Heart left ventricle (tissue), 16 donors: ENCODE measurements at regions of chr13 and their contacts with region 1.

Region 1: DNA sequence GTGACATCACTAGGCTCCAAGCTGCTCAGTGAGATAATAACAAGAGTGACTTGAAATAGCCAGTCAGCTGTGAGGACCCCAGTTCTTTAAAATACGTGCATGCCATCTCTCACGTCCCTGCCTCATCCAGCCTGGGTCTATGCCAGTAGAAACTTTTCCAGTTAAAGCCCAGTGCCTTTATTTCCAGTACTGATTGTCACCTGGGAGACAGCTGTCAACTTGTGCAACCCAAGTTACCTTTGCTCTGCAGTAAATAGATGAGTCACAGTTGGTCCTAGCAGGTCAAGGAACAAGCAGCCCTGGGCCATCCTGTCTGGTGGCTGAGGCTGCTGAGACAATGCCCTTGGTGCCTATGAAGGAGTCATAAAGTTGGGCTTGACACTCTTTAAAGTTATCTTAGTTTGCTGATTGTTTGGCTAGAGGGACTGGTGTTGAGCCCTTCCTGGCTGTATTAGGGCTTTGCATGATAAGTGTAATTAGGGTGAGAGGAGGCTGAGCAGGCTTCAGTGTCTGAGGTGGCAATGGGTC is 228.7 kb downstream of the LACC1 start:
- DNase-seq: peak in 4 of 5 donors; percentile 25 to 85 (median 50)
- ATAC-seq: peak; percentile 76 to 94 (median 84)
- H3K4me3 ChIP-seq: no peak overlapping the region
- H3K27ac ChIP-seq: peak overlapping the region; percentile 18 to 84 (median 75)
- H3K4me1 ChIP-seq: peaks cover 4 to 74% (median 28%) of the 10 kb centered on the region in 12 donors
- H3K27me3 ChIP-seq: no peaks in the 10 kb centered on the region
- CTCF ChIP-seq: no peak
- POLR2A ChIP-seq: no peak

Region 2: DNA sequence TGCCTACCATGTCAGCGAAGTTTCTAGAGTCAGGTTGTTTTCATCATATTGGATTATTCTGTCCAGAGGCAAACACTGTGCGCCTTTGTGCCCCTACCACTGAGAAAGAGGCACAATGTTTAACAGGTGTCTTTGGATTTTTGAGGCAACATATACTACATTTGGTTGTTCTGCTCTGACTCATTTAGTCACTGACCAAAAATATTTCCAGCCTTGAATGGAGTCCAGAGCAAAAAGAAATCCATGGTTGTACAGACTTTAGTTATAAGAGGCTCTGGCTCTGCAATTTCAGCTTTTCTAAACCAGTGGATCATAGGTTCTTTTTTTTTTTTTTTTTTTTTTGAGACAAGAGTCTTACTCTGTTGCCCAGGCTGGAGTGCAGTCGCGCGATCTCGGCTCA is 192.9 kb before region 1 on chr13:
- intact Hi-C with region 1: loop called in 1 of 10 experiments (anchors 5 kb)
- DNase-seq: no peak
- ATAC-seq: no peak
- H3K4me3 ChIP-seq: no peak overlapping the region
- H3K27ac ChIP-seq: no peak overlapping the region
- H3K4me1 ChIP-seq: peaks cover 0 to 20% (median 10%) of the 10 kb centered on the region in 12 donors
- H3K27me3 ChIP-seq: peaks cover 0 to 38% (median 0%) of the 10 kb centered on the region in 9 donors
- CTCF ChIP-seq: no peak
- POLR2A ChIP-seq: no peak

Region 3: GRCh38 chr13:44004878-44005277 is 103.5 kb before region 1 on chr13:
- intact Hi-C with region 1: no loop called
- DNase-seq: no peak
- ATAC-seq: no peak
- H3K4me3 ChIP-seq: no peak overlapping the region
- H3K27ac ChIP-seq: no peak overlapping the region
- H3K4me1 ChIP-seq: peaks cover 0 to 11% (median 0%) of the 10 kb centered on the region in 12 donors
- H3K27me3 ChIP-seq: no peaks in the 10 kb centered on the region
- CTCF ChIP-seq: no peak
- POLR2A ChIP-seq: no peak

Region 4: DNA sequence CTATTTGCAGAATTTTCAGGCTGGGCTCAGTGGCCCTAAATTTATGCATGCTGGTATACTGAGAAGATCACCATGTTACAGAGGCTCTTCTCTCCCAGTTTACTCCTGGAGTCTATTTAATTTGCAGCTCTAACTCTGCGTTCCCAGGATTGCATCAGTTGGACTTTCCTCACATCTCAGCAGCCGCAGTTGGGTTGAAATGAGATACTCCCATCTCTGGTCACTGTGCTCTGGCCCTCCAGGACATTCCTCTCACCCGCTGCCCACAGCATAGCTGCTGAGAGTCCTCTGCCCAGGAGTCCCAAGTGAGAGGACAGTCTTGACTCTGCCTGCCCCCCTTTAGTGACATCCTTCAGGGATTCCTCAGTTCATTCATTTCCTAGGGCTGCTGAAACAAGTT is 77.8 kb before region 1 on chr13:
- intact Hi-C with region 1: no loop called
- DNase-seq: no peak
- ATAC-seq: no peak
- H3K4me3 ChIP-seq: no peak overlapping the region
- H3K27ac ChIP-seq: no peak overlapping the region
- H3K4me1 ChIP-seq: no peaks in the 10 kb centered on the region
- H3K27me3 ChIP-seq: no peaks in the 10 kb centered on the region
- CTCF ChIP-seq: no peak
- POLR2A ChIP-seq: no peak

Region 5: GRCh38 chr13:44058624-44059215 is 49.7 kb before region 1 on chr13:
- intact Hi-C with region 1: loop called in 6 of 10 experiments (anchors 2 to 10 kb)
- DNase-seq: no peak
- ATAC-seq: peak in 1 of 4 donors; percentile 40
- H3K4me3 ChIP-seq: no peak overlapping the region
- H3K27ac ChIP-seq: peak overlapping the region in 7 of 12 donors; percentile 17 to 36 (median 31)
- H3K4me1 ChIP-seq: peaks cover 0 to 29% (median 11%) of the 10 kb centered on the region in 12 donors
- H3K27me3 ChIP-seq: no peaks in the 10 kb centered on the region
- CTCF ChIP-seq: no peak
- POLR2A ChIP-seq: no peak

Region 6: DNA sequence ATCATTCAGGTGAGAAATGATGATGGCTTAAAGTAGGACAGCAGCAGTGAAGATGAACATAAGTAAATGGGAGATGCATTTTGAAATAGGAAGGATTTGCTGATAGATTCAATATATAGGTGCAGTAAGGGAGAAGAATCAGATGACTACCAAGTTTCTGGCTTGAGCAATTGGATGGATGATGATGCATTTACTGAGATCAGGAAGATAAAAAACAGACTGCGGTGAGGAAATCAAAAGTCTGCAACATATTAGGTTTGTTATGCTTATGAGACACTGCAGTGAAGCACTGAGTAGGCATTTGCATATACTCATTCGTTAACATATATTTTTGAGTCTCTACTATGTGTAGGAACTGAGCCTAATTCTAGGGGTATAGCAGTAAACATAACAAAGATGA is 44.5 kb before region 1 on chr13:
- intact Hi-C with region 1: loop called in 5 of 10 experiments (anchors 2 to 10 kb)
- DNase-seq: no peak
- ATAC-seq: no peak
- H3K4me3 ChIP-seq: no peak overlapping the region
- H3K27ac ChIP-seq: no peak overlapping the region
- H3K4me1 ChIP-seq: peaks cover 0 to 16% (median 3%) of the 10 kb centered on the region in 12 donors
- H3K27me3 ChIP-seq: no peaks in the 10 kb centered on the region
- CTCF ChIP-seq: no peak
- POLR2A ChIP-seq: no peak

Region 7: DNA sequence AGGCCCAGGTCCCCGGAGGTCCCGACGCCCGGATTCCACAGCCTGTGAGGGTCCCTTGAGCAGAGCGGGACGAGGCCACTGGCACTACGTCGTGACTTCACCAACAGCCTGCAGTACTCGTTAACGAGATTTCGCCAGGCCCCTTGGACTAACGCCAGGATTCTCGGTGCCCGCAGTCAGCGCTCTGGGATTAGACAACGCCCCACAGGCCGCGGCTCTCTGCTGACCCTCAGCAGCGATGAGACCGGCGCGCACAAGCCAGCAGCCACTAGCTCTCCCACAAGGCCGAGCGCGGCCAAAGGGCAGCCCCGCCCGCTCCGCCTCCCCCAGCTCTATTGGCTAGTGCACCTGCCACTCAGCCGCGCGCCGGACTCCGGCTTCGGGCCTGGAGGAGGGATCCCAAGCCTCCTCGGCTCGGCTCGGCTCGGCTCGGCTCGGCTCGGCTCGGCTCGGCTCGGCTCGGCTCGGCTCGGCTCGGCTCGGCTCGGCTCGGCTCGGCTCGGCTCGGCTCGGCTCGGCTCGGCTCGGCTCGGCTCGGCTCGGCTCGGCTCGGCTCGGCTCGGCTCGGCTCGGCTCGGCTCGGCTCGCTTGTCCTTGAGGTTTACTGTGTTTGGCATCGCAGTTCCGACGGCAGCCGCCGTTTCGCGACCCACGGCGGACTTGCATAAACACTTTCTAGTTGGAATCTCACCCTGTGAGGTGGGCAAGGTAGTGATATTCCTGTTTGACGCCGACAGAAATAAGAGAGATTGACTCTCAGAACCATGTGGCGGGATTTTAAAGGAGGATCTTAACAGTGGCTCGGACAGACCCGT is 33.5 kb after region 1 on chr13:
- intact Hi-C with region 1: loop called in 1 of 10 experiments (anchors 5 kb)
- DNase-seq: peak; percentile 98 to 100 (median 98)
- ATAC-seq: peak; percentile 99 to 100 (median 100)
- H3K4me3 ChIP-seq: peak overlapping the region; percentile 28 to 73 (median 58)
- H3K27ac ChIP-seq: peak overlapping the region; percentile 86 to 99 (median 96)
- H3K4me1 ChIP-seq: peaks cover 0 to 21% (median 9%) of the 10 kb centered on the region in 12 donors
- H3K27me3 ChIP-seq: no peaks in the 10 kb centered on the region
- CTCF ChIP-seq: peak in 1 of 12 donors; percentile 16
- POLR2A ChIP-seq: peak; percentile 84 to 94

Region 8: DNA sequence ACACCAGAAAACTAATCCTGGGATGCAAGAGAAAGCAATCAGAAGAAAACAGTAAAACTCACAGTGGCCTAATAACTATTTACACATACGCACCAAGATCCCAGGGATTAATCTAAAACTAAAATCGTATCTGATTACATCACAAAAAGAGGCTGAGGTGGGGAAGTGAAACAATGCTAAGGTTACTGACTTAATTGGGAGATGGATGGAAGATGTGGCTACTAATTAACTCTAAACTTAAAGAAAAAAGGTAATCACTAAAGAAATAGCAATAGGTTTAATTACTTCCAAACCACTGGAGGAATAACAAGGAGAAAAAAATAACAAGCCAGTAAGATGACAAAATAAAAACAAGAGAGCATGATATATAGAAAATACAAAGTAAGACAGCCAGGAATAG is 830.5 kb after region 1 on chr13:
- intact Hi-C with region 1: no loop called
- DNase-seq: no peak
- ATAC-seq: no peak
- H3K4me3 ChIP-seq: no peak overlapping the region
- H3K27ac ChIP-seq: no peak overlapping the region
- H3K4me1 ChIP-seq: peaks cover 0 to 11% (median 0%) of the 10 kb centered on the region in 12 donors
- H3K27me3 ChIP-seq: no peaks in the 10 kb centered on the region
- CTCF ChIP-seq: no peak
- POLR2A ChIP-seq: no peak